Psoas muscle (tissue), 8 donors: ENCODE measurements at regions of chr3 and their contacts with region 1.

Region 1: DNA sequence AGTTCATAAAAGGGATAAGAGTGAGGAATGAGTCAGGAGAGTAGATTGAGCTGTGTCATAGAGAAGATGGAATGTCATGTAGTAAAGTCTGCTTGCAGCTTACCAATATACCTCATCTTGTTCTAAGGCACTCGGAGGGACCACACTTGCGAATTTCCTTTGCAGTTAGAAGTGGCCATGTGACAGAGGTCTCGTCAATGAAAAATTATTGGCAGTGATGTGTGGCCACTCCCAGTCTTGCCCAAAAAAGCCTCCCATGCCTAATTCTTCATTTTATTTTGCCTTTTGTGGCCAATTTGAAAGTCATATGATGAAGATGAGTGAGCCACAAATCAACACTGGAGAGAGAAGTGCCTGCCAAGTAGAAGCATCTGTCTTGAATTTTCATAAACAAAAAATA is 465.6 kb upstream of the ZNF385D start:
- DNase-seq: no peak
- ATAC-seq: no peak
- H3K4me3 ChIP-seq: no peak overlapping the region
- H3K27ac ChIP-seq: no peak overlapping the region
- H3K4me1 ChIP-seq: no peaks in the 10 kb centered on the region
- H3K27me3 ChIP-seq: no peaks in the 10 kb centered on the region
- CTCF ChIP-seq: no peak

Region 2: GRCh38 chr3:22231061-22231460 is 14.5 kb after region 1 on chr3:
- intact Hi-C with region 1: loop called in 1 of 2 experiments (anchors 1 kb)
- DNase-seq: no peak
- ATAC-seq: no peak
- H3K4me3 ChIP-seq: no peak overlapping the region
- H3K27ac ChIP-seq: no peak overlapping the region
- H3K4me1 ChIP-seq: no peaks in the 10 kb centered on the region
- H3K27me3 ChIP-seq: no peaks in the 10 kb centered on the region
- CTCF ChIP-seq: no peak